Gastrocnemius medialis (tissue), 4 donors: ENCODE measurements at regions of chr3 and their contacts with region 1.

Region 1: DNA sequence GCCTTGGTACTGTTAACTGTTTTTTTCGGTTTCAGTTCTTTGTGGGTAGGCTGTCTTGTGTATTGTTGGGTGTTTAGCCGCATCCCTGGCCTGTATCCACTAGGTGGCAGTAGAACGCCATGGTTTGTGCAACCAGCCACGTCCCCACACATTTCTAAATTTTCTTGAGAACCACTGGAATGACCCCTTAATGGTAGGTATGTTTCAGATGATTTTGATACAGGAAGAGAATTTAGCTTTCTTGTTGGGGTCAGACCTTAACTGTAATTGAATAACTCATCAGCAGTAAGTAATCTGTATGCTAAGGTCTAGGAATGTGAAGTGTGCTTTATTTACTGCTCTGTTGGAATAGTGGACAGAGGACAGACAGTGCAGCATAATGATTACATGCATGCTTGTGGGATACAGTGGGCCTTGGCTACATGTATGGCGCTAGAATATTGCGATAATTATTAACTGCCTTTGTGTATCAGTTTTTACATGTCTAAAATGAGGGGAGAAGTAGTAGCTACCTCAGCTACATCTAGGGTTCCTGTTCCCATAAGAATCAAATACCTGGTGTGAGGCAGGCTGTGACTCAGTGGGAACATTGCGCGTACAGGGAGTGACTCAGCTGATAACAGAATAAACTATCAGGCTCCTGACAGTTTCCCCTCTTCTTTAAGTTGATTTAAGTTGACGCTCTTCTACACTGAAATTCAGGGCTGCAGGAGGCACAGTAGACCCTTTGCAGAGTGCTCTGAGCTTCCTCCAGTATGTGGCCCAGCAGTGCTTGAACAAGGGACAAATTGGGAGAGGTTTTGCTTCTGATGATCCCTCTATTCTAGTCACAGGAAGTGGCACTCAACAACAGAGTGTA is 25.0 kb upstream of the GPR171 start:
- DNase-seq: peak; percentile 27 to 50
- ATAC-seq: peak; percentile 53 to 74
- H3K4me3 ChIP-seq: no peak overlapping the region
- H3K27ac ChIP-seq: peak overlapping the region; percentile 64 to 78 (median 70)
- H3K4me1 ChIP-seq: peaks cover 10 to 20% of the 10 kb centered on the region in 2 donors
- H3K27me3 ChIP-seq: no peaks in the 10 kb centered on the region
- CTCF ChIP-seq: peak; percentile 76 to 90 (median 86)
- POLR2A ChIP-seq: no peak

Region 2: GRCh38 chr3:151168269-151169094 is 59.6 kb before region 1 on chr3:
- in situ Hi-C with region 1: loop called in 2 of 4 experiments (anchors 5 kb)
- intact Hi-C with region 1: loop called (anchors 1 kb)
- DNase-seq: peak; percentile 69 to 77
- ATAC-seq: peak; percentile 67 to 68
- H3K4me3 ChIP-seq: no peak overlapping the region
- H3K27ac ChIP-seq: peak overlapping the region; percentile 77 to 86 (median 81)
- H3K4me1 ChIP-seq: peaks cover 14 to 16% of the 10 kb centered on the region in 2 donors
- H3K27me3 ChIP-seq: no peaks in the 10 kb centered on the region
- CTCF ChIP-seq: peak; percentile 65 to 84 (median 82)
- POLR2A ChIP-seq: no peak

Region 3: GRCh38 chr3:151276687-151277042 is 48.6 kb after region 1 on chr3:
- in situ Hi-C with region 1: loop called in 2 of 4 experiments (anchors 5 to 10 kb)
- intact Hi-C with region 1: no loop called
- DNase-seq: no peak
- ATAC-seq: no peak
- H3K4me3 ChIP-seq: peak overlapping the region in 3 of 4 donors; percentile 8 to 34 (median 9)
- H3K27ac ChIP-seq: peak overlapping the region; percentile 1 to 41 (median 26)
- H3K4me1 ChIP-seq: no peaks in the 10 kb centered on the region
- H3K27me3 ChIP-seq: no peaks in the 10 kb centered on the region
- CTCF ChIP-seq: no peak
- POLR2A ChIP-seq: no peak

Region 4: DNA sequence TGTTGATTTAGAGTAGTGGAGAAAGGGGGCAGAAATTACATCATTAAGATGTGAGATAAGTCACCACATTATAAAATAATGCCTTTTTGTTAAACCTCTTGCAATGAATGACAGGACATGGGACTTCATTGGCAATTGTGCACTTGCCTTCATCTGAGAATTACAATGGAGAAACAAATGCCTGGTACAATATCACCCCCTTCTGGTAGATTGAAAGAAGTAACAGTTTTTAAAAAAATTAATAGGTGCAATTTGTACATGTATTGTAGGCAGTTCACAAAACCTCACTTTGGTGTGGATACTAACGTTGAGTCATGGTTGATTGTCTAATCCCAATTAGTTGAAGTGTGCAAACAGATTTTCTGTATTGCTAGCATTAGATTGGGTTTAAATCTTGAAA is 54.9 kb after region 1 on chr3:
- in situ Hi-C with region 1: loop called in 2 of 4 experiments (anchors 5 to 10 kb)
- intact Hi-C with region 1: loop called (anchors 1 kb)
- DNase-seq: no peak
- ATAC-seq: peak; percentile 66 to 68
- H3K4me3 ChIP-seq: no peak overlapping the region
- H3K27ac ChIP-seq: peak overlapping the region in 1 of 4 donors; percentile 48
- H3K4me1 ChIP-seq: no peaks in the 10 kb centered on the region
- H3K27me3 ChIP-seq: no peaks in the 10 kb centered on the region
- CTCF ChIP-seq: peak; percentile 66 to 82 (median 72)
- POLR2A ChIP-seq: no peak

Region 5: GRCh38 chr3:151327571-151328198 is 99.6 kb after region 1 on chr3:
- in situ Hi-C with region 1: no loop called
- intact Hi-C with region 1: loop called (anchors 2 kb)
- DNase-seq: no peak
- ATAC-seq: no peak
- H3K4me3 ChIP-seq: peak overlapping the region in 1 of 4 donors; percentile 11
- H3K27ac ChIP-seq: no peak overlapping the region
- H3K4me1 ChIP-seq: no peaks in the 10 kb centered on the region
- H3K27me3 ChIP-seq: no peaks in the 10 kb centered on the region
- CTCF ChIP-seq: peak in 3 of 5 experiments; percentile 18 to 61 (median 42)
- POLR2A ChIP-seq: no peak

Region 6: GRCh38 chr3:151838583-151839312 is 610.7 kb after region 1 on chr3:
- in situ Hi-C with region 1: no loop called
- intact Hi-C with region 1: loop called (anchors 10 kb)
- DNase-seq: no peak
- ATAC-seq: peak in 1 of 2 donors; percentile 73
- H3K4me3 ChIP-seq: peak overlapping the region in 2 of 4 donors; percentile 20 to 32
- H3K27ac ChIP-seq: no peak overlapping the region
- H3K4me1 ChIP-seq: peaks cover 0 to 5% of the 10 kb centered on the region in 2 donors
- H3K27me3 ChIP-seq: no peaks in the 10 kb centered on the region
- CTCF ChIP-seq: peak; percentile 57 to 76 (median 65)
- POLR2A ChIP-seq: no peak